Activated T-helper 1 cell treated with anti-CD3 and anti-CD28 coated beads, Interleukin-12 subunit alpha, Interleukin-12 subunit beta, Interleukin-2, Interleukin-4 antibody, amounts not matched to agents 30 ng/mL and 10 ng/mL and 1 ng/mL, durations not matched to agents 14 hours and 24 hours and 36 hours (primary cell): ENCODE measurements at regions of chr1 and their contacts with region 1.

Region 1: GRCh38 chr1:27365372-27366112 is 1.2 kb downstream of the MAP3K6 start:
- DNase-seq: peak; percentile 60
- H3K4me3 Mint-ChIP-seq: peak overlapping the region; percentile 90
- H3K27ac Mint-ChIP-seq: peak overlapping the region; percentile 86
- H3K4me1 Mint-ChIP-seq: peaks cover 38% of the 10 kb centered on the region
- H3K27me3 Mint-ChIP-seq: no peaks in the 10 kb centered on the region

Region 2: DNA sequence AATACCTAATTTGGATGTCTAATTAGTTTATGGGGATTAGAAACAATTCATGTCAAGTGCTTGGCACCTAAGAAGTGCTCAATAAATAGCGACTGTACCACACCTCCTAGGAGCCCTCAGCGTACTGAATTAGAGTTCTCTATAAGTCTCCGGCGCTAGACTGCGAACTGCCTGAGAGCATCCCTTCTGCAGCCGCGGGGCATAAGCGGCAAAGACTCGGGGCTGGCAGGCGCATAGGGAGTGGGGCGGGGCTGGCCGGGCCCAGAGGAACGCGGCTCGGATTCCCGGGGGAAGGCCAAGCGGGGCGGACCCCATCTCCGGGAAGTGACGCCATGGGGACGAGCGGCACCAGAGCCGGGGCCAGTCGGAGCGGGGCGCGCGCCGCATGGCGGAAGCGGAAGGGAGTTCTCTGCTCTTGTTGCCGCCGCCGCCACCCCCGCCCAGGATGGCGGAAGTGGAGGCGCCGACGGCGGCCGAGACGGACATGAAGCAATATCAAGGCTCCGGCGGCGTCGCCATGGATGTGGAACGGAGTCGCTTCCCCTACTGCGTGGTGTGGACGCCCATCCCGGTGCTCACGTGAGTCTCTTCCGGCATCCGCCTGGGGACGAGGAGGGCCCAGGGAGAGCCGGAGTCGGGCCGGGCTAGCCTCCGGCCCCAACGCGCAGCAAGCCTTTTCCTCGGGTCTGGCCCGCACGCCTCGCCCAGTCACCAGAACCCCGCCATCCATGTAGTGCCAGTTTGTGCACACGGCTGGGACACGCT is 43.5 kb before region 1 on chr1 and contains the start of gene TMEM222:
- intact Hi-C with region 1: loop called (anchors 1 kb)
- DNase-seq: peak; percentile 98
- H3K4me3 Mint-ChIP-seq: peak within 1 kb of the TSS; percentile 97
- H3K27ac Mint-ChIP-seq: peak within 1 kb of the TSS; percentile 90
- H3K4me1 Mint-ChIP-seq: peaks cover 33% of the 10 kb centered on the region
- H3K27me3 Mint-ChIP-seq: no peaks in the 10 kb centered on the region
- total RNA-seq, gene TMEM222: 44.3 and 47.4 TPM in 2 replicates

Region 3: GRCh38 chr1:27383039-27383605 is 17.6 kb after region 1 on chr1 and contains the start of gene CD164L2:
- intact Hi-C with region 1: loop called (anchors 1 kb)
- DNase-seq: peak; percentile 46
- H3K4me3 Mint-ChIP-seq: no peak within 1 kb of the TSS
- H3K27ac Mint-ChIP-seq: no peak within 1 kb of the TSS
- H3K4me1 Mint-ChIP-seq: no peaks in the 10 kb centered on the region
- H3K27me3 Mint-ChIP-seq: peaks cover 14% of the 10 kb centered on the region
- total RNA-seq, gene CD164L2: not detected in 2 replicates